K562 (cell line): ENCODE measurements at regions of chr9 and their contacts with region 1.

Region 1: GRCh38 chr9:116420993-116421538 is 266.0 kb upstream of the TRIM32 start:
- DNase-seq: peak in 2 of 4 experiments; percentile 40 to 67
- ATAC-seq: peak; percentile 11
- H3K4me3 ChIP-seq: no peak overlapping the region
- H3K27ac ChIP-seq: peak overlapping the region; percentile 16; the same call in 1 of the 3 replicates
- H3K4me1 ChIP-seq: peaks cover 13 to 63% of the 10 kb centered on the region in 2 experiments
- H3K27me3 ChIP-seq: no peaks in the 10 kb centered on the region
- CTCF ChIP-seq: no peak
- EP300 ChIP-seq: no peak
- POLR2A ChIP-seq: no peak
- RAD21 ChIP-seq: no peak

Region 2: GRCh38 chr9:116365056-116365471 is 56.0 kb before region 1 on chr9:
- CTCF ChIA-PET with region 1: no interaction called
- POLR2A ChIA-PET with region 1: no interaction called
- in situ Hi-C with region 1: no loop called
- intact Hi-C with region 1: no loop called
- DNase-seq: no peak
- ATAC-seq: no peak
- H3K4me3 ChIP-seq: no peak overlapping the region
- H3K27ac ChIP-seq: no peak overlapping the region
- H3K4me1 ChIP-seq: peaks cover 0 to 16% of the 10 kb centered on the region in 2 experiments; a peak in 3 of 5 replicates
- H3K27me3 ChIP-seq: no peaks in the 10 kb centered on the region
- CTCF ChIP-seq: no peak
- EP300 ChIP-seq: no peak
- POLR2A ChIP-seq: no peak
- RAD21 ChIP-seq: no peak

Region 3: GRCh38 chr9:116377479-116377779 is 43.6 kb before region 1 on chr9:
- CTCF ChIA-PET with region 1: no interaction called
- POLR2A ChIA-PET with region 1: no interaction called
- in situ Hi-C with region 1: no loop called
- intact Hi-C with region 1: no loop called
- DNase-seq: no peak
- ATAC-seq: no peak
- H3K4me3 ChIP-seq: no peak overlapping the region
- H3K27ac ChIP-seq: no peak overlapping the region
- H3K4me1 ChIP-seq: peaks cover 3 to 15% of the 10 kb centered on the region in 2 experiments; a peak in 3 of 5 replicates
- H3K27me3 ChIP-seq: no peaks in the 10 kb centered on the region
- CTCF ChIP-seq: no peak
- EP300 ChIP-seq: no peak
- POLR2A ChIP-seq: no peak
- RAD21 ChIP-seq: no peak

Region 4: GRCh38 chr9:116432051-116432450 is 11.0 kb after region 1 on chr9:
- CTCF ChIA-PET with region 1: no interaction called
- POLR2A ChIA-PET with region 1: interaction called, 19 read pairs
- in situ Hi-C with region 1: no loop called
- intact Hi-C with region 1: loop called (anchors 2 kb)
- DNase-seq: no peak
- ATAC-seq: no peak
- H3K4me3 ChIP-seq: no peak overlapping the region
- H3K27ac ChIP-seq: no peak overlapping the region
- H3K4me1 ChIP-seq: peaks cover 0 to 2% of the 10 kb centered on the region in 2 experiments; a peak in 4 of 5 replicates
- H3K27me3 ChIP-seq: no peaks in the 10 kb centered on the region
- CTCF ChIP-seq: no peak
- EP300 ChIP-seq: no peak
- POLR2A ChIP-seq: no peak
- RAD21 ChIP-seq: no peak

Region 5: GRCh38 chr9:116464987-116465571 is 44.0 kb after region 1 on chr9:
- CTCF ChIA-PET with region 1: no interaction called
- POLR2A ChIA-PET with region 1: interaction called, 6 read pairs
- in situ Hi-C with region 1: no loop called
- intact Hi-C with region 1: loop called (anchors 1 kb)
- DNase-seq: peak; percentile 65 to 97 (median 80)
- ATAC-seq: peak; percentile 79
- H3K4me3 ChIP-seq: no peak overlapping the region
- H3K27ac ChIP-seq: peak overlapping the region; percentile 95
- H3K4me1 ChIP-seq: peaks cover 23 to 79% of the 10 kb centered on the region in 2 experiments
- H3K27me3 ChIP-seq: no peaks in the 10 kb centered on the region
- CTCF ChIP-seq: no peak
- EP300 ChIP-seq: peak; percentile 100
- POLR2A ChIP-seq: no peak
- RAD21 ChIP-seq: peak; percentile 37 to 46